ENCODE measurements at regions of chr5 and their contacts with region 1.

Region 1: DNA sequence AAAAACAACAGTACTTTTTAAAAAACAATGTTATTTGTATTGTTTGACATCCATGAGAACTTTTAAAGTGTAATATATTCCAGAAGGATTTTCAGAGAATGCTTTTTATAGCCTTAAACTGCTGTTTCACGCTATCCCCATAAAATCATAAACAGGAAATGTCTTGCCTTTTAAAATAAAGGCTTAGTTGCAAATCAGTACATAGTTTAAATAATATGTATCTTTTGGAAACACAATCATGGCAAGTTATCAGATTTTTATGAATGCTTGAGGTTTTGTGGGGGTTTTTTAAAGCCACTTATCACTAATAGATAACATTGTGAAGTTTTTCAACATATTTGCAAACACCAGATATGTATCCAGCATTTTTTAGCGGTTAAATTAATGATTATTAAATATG is 37.2 kb upstream of the F2RL2 start:
- DNase-seq: no peak

Region 2: DNA sequence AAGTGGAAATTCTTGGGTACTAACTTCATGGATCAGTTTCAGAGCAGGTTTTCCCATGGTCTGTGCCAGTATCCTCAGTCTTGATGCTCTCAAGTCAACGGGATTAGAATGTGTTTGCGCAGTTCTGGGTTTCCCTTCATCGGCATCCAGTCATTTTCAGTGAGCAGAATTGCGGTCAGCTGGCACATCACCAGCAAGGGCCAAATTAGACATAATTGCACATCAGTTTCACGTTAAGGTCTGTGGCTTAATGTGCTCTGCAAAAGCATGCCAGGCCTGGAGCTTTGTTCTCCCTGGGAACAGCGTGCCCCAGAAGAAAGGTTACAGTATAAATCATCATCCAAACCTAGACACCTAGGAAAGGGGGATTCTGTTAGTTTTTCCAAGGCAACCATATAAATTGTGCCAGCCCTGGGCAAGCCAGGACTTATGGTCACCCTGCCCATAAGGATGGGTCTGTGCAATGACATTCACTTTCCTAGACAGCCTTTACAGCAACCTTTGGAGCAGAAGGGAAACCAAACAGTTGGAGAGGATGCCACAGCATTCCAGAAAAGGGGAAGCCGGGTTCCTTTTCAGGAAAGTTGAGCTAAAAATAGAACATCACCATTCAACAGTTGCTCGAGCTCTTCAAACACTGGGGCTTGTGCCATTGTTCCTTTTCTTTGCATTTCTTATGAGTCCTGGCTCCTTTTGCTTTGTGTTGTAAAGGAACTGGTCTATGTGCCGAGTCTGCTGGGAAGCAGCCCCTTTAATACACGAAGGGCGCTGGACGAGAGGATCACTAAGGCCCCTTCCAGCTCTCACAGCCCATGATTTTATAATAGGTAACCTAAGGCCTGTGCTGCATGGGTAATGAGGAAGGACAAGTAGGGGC is 234.2 kb before region 1 on chr5:
- intact Hi-C with region 1: loop called in 1 of 2 experiments (anchors 5 kb)
- DNase-seq: no peak

Region 3: DNA sequence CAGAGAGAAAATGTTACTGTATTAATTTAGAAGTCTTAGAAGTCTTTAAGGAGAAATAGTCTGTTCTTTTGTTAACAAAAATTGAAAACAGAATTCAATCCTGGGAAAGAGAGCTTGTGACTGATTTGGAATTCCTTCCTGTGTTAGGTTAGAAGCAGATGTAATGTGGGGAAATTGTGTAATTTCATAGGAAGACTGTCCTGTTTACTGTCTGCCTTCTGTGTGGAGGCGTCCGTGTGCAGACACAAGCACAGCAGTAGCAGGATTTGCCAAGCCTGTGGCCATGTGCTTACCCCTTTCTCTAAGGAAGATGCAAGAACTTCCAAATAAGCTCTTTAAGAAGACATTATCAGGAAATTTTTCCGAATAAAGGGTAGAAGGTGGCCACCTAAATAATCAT is 18.9 kb after region 1 on chr5:
- intact Hi-C with region 1: no loop called
- DNase-seq: no peak

Region 4: GRCh38 chr5:78253201-78253600 is 1592.8 kb after region 1 on chr5:
- intact Hi-C with region 1: loop called in 1 of 2 experiments (anchors 10 kb)
- DNase-seq: no peak

Measured in posterior vena cava (tissue), 2 donors.